ENCODE measurements at regions of chr1 and their contacts with region 1.

Region 1: DNA sequence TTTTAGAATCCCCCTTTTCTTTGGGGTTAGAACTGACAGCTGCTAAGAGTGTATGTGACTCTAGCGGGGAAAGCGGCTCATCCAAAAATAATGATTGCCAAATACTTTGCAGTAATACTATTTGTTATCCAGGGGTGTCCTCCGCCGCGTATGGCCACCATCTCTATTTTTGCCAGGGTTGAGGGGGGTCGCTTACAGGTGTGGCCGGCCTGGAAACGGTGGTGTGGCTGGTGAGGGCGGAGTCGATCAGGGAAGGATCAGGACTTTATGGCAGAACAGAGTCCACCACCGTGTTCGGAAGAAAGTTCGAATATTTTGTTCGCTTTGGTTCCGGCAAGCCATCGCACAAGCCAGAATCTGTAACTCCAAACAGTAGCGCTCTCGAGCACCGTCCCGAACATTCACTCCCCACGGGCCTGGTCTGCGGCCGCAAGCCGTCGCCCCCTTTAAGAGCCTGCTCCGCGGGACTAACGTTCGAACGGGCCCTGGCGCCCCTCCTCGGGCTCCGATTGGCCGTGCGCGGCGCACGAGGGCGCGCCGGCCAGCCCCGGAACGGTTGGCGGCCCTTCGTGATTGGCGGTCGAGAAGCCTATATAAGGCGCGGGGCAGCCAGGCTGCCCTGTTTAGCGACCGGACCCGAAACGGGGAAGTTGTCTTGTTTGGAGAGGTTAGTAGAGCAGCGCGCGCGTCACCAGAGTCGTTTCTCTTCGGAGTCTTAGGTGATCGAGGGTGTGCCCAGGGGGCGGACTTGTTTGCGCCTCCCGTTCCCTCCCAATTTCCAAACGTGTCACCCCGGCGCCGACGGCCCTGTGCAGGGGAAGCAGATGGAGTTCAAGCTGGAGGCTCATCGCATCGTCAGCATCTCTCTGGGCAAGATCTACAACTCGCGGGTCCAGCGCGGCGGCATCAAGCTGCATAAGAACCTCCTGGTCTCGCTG is at the start of gene IER5:
- DNase-seq: peak; percentile 96
- ATAC-seq: peak; percentile 80
- H3K4me3 Mint-ChIP-seq: peak within 1 kb of the TSS; percentile 100
- H3K27ac Mint-ChIP-seq: peak within 1 kb of the TSS; percentile 100
- H3K4me1 Mint-ChIP-seq: peaks cover 40% of the 10 kb centered on the region
- H3K27me3 Mint-ChIP-seq: no peaks in the 10 kb centered on the region
- CTCF ChIP-seq: no peak
- total RNA-seq, gene IER5: 39.8 to 41.3 TPM

Region 2: DNA sequence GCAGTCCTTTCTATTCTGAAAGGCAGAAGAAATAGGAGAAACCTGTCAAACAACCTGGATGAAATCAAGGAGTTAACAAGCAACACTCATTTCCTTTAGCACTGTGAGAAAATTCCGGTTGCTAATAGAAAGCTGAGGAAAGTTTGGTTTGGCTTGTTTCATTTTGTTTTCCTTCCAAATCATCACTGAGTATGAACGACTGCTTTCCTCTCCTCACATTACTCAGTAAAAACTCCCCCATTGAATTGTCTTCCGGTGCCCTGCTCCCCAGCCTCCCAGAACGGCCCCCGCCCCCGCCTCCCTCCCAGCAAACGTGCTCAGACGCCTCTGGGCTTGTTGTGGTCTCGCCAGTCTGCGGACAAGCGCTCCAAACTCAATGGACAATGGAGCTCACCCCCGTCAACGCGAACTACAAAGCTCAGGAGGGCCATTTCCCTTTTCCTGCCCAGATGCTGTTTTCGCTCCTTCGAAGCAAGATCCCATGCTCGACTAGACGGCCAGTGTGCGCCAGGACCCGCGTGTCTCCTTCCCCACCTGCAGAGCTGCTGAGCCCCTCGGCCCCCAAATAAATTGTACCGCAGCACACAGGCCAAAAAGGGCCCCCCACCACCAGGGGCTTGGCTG is 66.4 kb before region 1 on chr1:
- CTCF ChIA-PET with region 1: interaction called, 4 read pairs
- POLR2A ChIA-PET with region 1: interaction called, 31 read pairs
- intact Hi-C with region 1: no loop called
- DNase-seq: peak; percentile 80
- ATAC-seq: peak; percentile 48
- H3K4me3 Mint-ChIP-seq: peak overlapping the region; percentile 97
- H3K27ac Mint-ChIP-seq: peak overlapping the region; percentile 97
- H3K4me1 Mint-ChIP-seq: peaks cover 40% of the 10 kb centered on the region
- H3K27me3 Mint-ChIP-seq: no peaks in the 10 kb centered on the region
- CTCF ChIP-seq: no peak

Region 3: DNA sequence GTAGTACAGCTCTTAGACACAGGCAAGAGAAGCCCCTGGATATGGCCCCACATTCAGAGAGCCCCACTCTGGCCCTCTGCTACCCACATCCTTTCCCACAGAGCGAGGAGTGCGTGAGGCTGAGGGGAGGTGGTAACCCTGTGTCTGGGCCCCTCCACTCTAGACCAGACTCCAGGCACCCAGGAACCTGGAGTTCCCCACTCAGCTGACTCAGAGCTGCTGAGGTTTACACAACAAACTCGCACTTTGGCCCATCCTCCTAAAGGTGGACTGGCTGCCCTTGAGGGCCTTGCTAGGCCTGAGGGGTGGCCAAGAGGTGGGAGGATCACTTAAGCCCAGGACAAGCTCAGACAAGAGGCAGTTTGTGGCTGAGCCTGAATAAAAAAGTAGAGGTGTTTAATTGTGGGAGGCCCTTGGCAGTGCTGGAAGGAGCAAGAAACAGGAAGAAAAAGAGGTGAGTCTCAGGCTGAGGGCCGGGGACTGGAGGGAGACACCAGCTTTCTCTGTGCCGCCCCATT is 43.8 kb before region 1 on chr1:
- CTCF ChIA-PET with region 1: interaction called, 19 read pairs
- POLR2A ChIA-PET with region 1: interaction called, 6 read pairs
- intact Hi-C with region 1: loop called (anchors 5 kb)
- DNase-seq: peak; percentile 90
- ATAC-seq: peak; percentile 97
- H3K4me3 Mint-ChIP-seq: peak overlapping the region; percentile 44
- H3K27ac Mint-ChIP-seq: peak overlapping the region; percentile 90
- H3K4me1 Mint-ChIP-seq: peaks cover 47% of the 10 kb centered on the region
- H3K27me3 Mint-ChIP-seq: no peaks in the 10 kb centered on the region
- CTCF ChIP-seq: no peak

Region 4: DNA sequence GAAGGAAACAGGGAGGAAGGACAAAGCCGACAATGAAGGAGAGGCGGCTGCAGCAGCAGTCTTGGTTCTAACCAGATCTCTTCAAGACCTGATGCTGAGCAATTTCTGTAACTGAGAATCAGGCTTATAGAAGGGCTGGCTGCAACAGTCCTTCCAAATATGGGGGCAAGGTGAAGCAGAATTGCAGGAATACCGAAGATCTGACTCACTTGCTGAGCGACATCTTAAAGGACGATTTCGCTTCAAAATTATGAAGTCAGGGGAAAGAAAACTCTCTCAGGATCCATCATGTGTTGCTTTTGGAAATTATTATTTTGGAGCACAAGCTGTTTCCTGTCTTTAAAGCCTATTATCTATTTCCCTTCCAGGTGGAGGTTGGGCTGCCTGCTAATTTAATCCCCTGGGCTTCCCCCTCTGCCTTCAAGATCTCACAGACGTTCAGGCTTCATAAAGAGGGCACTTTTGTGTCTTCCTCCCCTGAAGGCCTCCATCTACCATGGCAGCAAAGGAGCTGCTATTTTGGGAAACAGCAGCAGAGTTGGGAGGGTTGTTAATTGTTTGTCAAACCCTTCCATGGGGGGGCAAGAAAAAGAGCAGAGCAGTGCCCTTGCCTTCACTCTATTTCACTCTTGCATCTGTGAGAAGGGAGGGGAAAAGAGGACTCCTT is 10.6 kb before region 1 on chr1:
- CTCF ChIA-PET with region 1: interaction called, 5 read pairs
- POLR2A ChIA-PET with region 1: interaction called, 18 read pairs
- intact Hi-C with region 1: no loop called
- DNase-seq: no peak
- ATAC-seq: no peak
- H3K4me3 Mint-ChIP-seq: no peak overlapping the region
- H3K27ac Mint-ChIP-seq: no peak overlapping the region
- H3K4me1 Mint-ChIP-seq: peaks cover 5% of the 10 kb centered on the region
- H3K27me3 Mint-ChIP-seq: peaks cover 11% of the 10 kb centered on the region
- CTCF ChIP-seq: no peak

Region 5: DNA sequence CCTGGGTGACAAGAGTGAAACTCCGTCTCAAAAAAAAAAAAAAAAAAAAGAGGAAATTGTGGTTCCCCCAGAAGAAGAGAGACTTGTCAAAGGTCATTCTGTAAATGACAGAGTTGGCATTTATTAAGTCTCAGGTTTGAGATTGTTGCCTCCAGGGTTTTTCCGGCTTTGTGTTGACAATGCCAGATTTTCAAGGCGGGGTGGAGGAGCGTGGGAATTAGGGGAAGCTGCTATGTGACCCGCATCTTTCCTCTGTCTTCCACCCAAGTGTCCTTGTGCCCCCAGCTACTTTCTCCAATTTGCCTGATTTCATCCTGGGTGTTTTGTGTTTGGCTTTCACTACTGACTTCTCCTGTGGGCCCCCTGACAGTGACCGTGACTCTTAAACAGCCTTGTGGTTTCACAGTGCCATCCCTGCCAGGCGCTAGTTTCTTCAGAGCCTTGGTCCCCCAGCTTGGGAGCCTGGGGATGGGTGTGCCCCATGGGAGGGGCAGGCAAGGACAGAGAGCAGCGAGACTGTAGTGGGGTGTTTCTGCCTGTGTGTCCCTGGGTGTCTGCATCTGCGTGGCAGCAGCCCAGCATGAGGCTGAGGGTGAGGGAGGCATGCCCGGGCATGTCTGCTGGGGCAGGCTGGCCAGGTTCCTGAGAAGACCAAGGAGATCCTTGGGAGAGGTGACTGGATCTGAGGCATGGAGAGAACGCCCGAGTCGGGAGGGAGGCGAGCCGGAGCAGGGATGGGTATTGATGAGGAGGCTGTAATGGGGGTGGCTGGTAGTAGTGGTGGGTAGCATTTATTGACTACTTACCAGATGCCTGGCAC is 46.4 kb after region 1 on chr1:
- CTCF ChIA-PET with region 1: interaction called, 179 read pairs
- POLR2A ChIA-PET with region 1: interaction called, 125 read pairs
- intact Hi-C with region 1: no loop called
- DNase-seq: peak; percentile 83
- ATAC-seq: peak; percentile 82
- H3K4me3 Mint-ChIP-seq: peak overlapping the region; percentile 63
- H3K27ac Mint-ChIP-seq: peak overlapping the region; percentile 93
- H3K4me1 Mint-ChIP-seq: peaks cover 65% of the 10 kb centered on the region
- H3K27me3 Mint-ChIP-seq: peaks cover 6% of the 10 kb centered on the region
- CTCF ChIP-seq: no peak

Region 6: GRCh38 chr1:181166377-181167196 is 78.2 kb after region 1 on chr1:
- CTCF ChIA-PET with region 1: interaction called, 10 read pairs
- POLR2A ChIA-PET with region 1: interaction called, 7 read pairs
- intact Hi-C with region 1: loop called (anchors 5 kb)
- DNase-seq: peak; percentile 88
- ATAC-seq: peak; percentile 100
- H3K4me3 Mint-ChIP-seq: no peak overlapping the region
- H3K27ac Mint-ChIP-seq: peak overlapping the region; percentile 71
- H3K4me1 Mint-ChIP-seq: peaks cover 4% of the 10 kb centered on the region
- H3K27me3 Mint-ChIP-seq: no peaks in the 10 kb centered on the region
- CTCF ChIP-seq: peak; percentile 92

Region 7: DNA sequence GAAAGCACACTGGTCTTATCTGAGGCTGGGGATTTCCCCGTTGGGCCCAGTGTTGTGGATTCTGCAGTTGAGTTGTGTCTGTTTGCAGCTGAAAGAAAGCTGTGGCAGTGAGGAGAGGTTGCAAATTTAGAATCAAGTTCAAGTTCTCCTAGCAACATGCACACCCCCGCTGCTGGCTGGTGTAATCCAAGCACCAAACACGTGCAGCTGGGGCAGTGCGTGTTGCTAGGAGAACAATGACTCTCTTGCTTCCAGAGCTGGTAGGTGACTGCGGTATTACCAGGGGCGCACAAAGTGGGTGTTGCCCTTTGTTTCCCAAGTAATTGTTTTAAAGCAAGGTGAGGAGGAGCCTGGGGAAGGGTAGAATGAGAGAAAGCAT is 91.6 kb after region 1 on chr1:
- CTCF ChIA-PET with region 1: no interaction called
- POLR2A ChIA-PET with region 1: no interaction called
- intact Hi-C with region 1: no loop called
- DNase-seq: peak; percentile 82
- ATAC-seq: peak; percentile 94
- H3K4me3 Mint-ChIP-seq: peak overlapping the region; percentile 10
- H3K27ac Mint-ChIP-seq: peak overlapping the region; percentile 53
- H3K4me1 Mint-ChIP-seq: peaks cover 12% of the 10 kb centered on the region
- H3K27me3 Mint-ChIP-seq: no peaks in the 10 kb centered on the region
- CTCF ChIP-seq: no peak

Region 8: DNA sequence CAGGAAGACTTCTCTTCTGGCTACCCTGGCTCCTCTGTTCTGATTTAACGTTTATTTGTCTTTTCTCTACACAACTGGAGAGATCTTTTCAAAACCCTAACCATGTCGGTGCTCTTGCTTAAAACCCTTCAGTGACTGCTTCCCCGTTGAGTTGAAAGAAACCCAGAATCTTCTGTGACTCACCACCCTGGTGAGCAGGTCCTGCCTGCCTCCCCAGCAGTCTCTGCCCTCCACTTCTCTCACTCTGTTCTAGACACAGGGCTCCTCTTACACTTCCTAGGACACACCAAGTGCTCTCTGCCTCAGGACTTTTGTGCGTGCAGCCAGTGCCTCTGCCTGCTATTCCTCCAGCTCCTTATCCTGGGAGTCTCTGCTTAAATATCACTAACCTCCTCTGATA is 131.6 kb after region 1 on chr1:
- CTCF ChIA-PET with region 1: no interaction called
- POLR2A ChIA-PET with region 1: no interaction called
- intact Hi-C with region 1: no loop called
- DNase-seq: no peak
- ATAC-seq: no peak
- H3K4me3 Mint-ChIP-seq: no peak overlapping the region
- H3K27ac Mint-ChIP-seq: no peak overlapping the region
- H3K4me1 Mint-ChIP-seq: no peaks in the 10 kb centered on the region
- H3K27me3 Mint-ChIP-seq: no peaks in the 10 kb centered on the region
- CTCF ChIP-seq: no peak

Region 9: GRCh38 chr1:181310560-181310959 is 222.2 kb after region 1 on chr1:
- CTCF ChIA-PET with region 1: no interaction called
- POLR2A ChIA-PET with region 1: no interaction called
- intact Hi-C with region 1: no loop called
- DNase-seq: no peak
- ATAC-seq: no peak
- H3K4me3 Mint-ChIP-seq: no peak overlapping the region
- H3K27ac Mint-ChIP-seq: no peak overlapping the region
- H3K4me1 Mint-ChIP-seq: peaks cover 9% of the 10 kb centered on the region
- H3K27me3 Mint-ChIP-seq: peaks cover 16% of the 10 kb centered on the region
- CTCF ChIP-seq: no peak

Region 10: DNA sequence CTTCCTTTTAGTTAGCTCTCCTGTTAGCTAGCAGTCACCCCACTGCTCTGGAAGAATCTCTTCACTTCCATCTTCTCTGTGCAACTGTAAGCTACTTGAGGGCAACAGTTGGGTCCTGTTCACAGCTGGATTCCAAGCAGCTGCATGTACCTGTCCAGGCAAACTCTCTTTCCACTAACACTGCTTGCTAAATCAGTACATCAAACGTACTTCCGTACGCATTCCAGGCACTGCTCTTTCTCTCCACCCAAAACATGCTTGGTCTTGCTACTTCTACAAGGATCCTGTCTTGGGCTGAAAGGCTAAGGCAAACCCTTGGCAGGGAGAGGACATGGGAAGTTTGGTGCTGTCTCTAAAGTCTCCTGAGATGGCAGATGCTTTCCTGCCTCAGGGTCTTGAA is 255.7 kb after region 1 on chr1:
- CTCF ChIA-PET with region 1: no interaction called
- POLR2A ChIA-PET with region 1: no interaction called
- intact Hi-C with region 1: no loop called
- DNase-seq: no peak
- ATAC-seq: no peak
- H3K4me3 Mint-ChIP-seq: no peak overlapping the region
- H3K27ac Mint-ChIP-seq: no peak overlapping the region
- H3K4me1 Mint-ChIP-seq: peaks cover 9% of the 10 kb centered on the region
- H3K27me3 Mint-ChIP-seq: no peaks in the 10 kb centered on the region
- CTCF ChIP-seq: no peak